ENCODE measurements at regions of chr9 and their contacts with region 1.

Region 1: DNA sequence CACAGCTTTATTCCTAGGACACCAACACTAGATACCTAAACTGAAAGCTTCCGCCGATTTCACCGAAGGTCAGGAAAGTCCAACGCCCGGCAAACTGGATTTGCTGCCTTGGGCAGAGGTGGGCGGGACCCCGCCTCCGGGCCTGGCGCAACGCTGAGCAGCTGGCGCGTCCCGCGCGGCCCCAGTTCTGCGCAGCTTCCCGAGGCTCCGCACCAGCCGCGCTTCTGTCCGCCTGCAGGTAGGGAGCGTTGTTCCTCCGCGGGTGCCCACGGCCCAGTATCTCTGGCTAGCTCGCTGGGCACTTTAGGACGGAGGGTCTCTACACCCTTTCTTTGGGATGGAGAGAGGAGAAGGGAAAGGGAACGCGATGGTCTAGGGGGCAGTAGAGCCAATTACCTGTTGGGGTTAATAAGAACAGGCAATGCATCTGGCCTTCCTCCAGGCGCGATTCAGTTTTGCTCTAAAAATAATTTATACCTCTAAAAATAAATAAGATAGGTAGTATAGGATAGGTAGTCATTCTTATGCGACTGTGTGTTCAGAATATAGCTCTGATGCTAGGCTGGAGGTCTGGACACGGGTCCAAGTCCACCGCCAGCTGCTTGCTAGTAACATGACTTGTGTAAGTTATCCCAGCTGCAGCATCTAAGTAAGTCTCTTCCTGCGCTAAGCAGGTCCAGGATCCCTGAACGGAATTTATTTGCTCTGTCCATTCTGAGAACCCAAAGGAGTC is at the start of gene CD274:
- DNase-seq: peak; percentile 64 to 85 (median 71)
- ATAC-seq: peak; percentile 97
- H3K4me3 Mint-ChIP-seq: peak within 1 kb of the TSS; percentile 93 to 96 (median 94)
- H3K27ac Mint-ChIP-seq: peak within 1 kb of the TSS; percentile 93 to 100 (median 97)
- H3K4me1 Mint-ChIP-seq: peaks cover 17 to 69% (median 32%) of the 10 kb centered on the region in 4 donors
- H3K27me3 Mint-ChIP-seq: no peaks in the 10 kb centered on the region
- polyA plus RNA-seq, gene CD274: 1.1 to 3.9 (median 1.6) TPM

Region 2: GRCh38 chr9:5375091-5375490 is 75.4 kb before region 1 on chr9:
- POLR2A ChIA-PET with region 1: no interaction called
- DNase-seq: no peak
- ATAC-seq: no peak
- H3K4me3 Mint-ChIP-seq: no peak overlapping the region
- H3K27ac Mint-ChIP-seq: peak overlapping the region in 2 of 10 donors; percentile 48 to 64
- H3K4me1 Mint-ChIP-seq: peaks cover 19 to 33% (median 21%) of the 10 kb centered on the region in 4 donors
- H3K27me3 Mint-ChIP-seq: no peaks in the 10 kb centered on the region

Region 3: GRCh38 chr9:5437254-5438216 is 13.0 kb before region 1 on chr9 and contains the start of gene PLGRKT:
- POLR2A ChIA-PET with region 1: interaction called, 36 read pairs
- DNase-seq: peak; percentile 74 to 94 (median 88)
- ATAC-seq: peak; percentile 95 to 96
- H3K4me3 Mint-ChIP-seq: peak within 1 kb of the TSS; percentile 83 to 98 (median 95)
- H3K27ac Mint-ChIP-seq: peak within 1 kb of the TSS; percentile 94 to 100 (median 98)
- H3K4me1 Mint-ChIP-seq: peaks cover 17 to 39% (median 35%) of the 10 kb centered on the region in 4 donors
- H3K27me3 Mint-ChIP-seq: no peaks in the 10 kb centered on the region
- polyA plus RNA-seq, gene PLGRKT: 45.2 to 60.3 (median 55.8) TPM

Region 4: GRCh38 chr9:5557606-5558587 is 107.4 kb after region 1 on chr9:
- POLR2A ChIA-PET with region 1: interaction called, 13 read pairs
- DNase-seq: peak; percentile 10 to 70 (median 47)
- ATAC-seq: peak; percentile 99
- H3K4me3 Mint-ChIP-seq: peak overlapping the region; percentile 31 to 80 (median 66)
- H3K27ac Mint-ChIP-seq: peak overlapping the region; percentile 85 to 98 (median 92)
- H3K4me1 Mint-ChIP-seq: peaks cover 34 to 57% (median 47%) of the 10 kb centered on the region in 4 donors
- H3K27me3 Mint-ChIP-seq: peaks cover 0 to 2% (median 0%) of the 10 kb centered on the region in 5 donors

Measured in naive thymus-derived CD8-positive, alpha-beta T cell (primary cell).